CD8-positive, alpha-beta T cell (primary cell): ENCODE measurements at regions of chr1 and their contacts with region 1.

Region 1: GRCh38 chr1:9784508-9785133 is 39.1 kb downstream of the CLSTN1 start:
- DNase-seq: peak; percentile 36 to 84 (median 66)
- ATAC-seq: peak; percentile 54
- H3K4me3 ChIP-seq: no peak overlapping the region
- H3K4me3 Mint-ChIP-seq: no peak overlapping the region
- H3K27ac ChIP-seq: no peak overlapping the region
- H3K27ac Mint-ChIP-seq: no peak overlapping the region
- H3K4me1 ChIP-seq: peaks cover 20% of the 10 kb centered on the region
- H3K4me1 Mint-ChIP-seq: peaks cover 33% of the 10 kb centered on the region
- H3K27me3 ChIP-seq: no peaks in the 10 kb centered on the region
- H3K27me3 Mint-ChIP-seq: no peaks in the 10 kb centered on the region
- CTCF ChIP-seq: peak; percentile 80

Region 2: GRCh38 chr1:9615316-9616063 is 169.1 kb before region 1 on chr1:
- CTCF ChIA-PET with region 1: interaction called, 18 read pairs
- POLR2A ChIA-PET with region 1: no interaction called
- intact Hi-C with region 1: no loop called
- DNase-seq: peak; percentile 28 to 77 (median 58)
- ATAC-seq: peak; percentile 95
- H3K4me3 ChIP-seq: no peak overlapping the region
- H3K4me3 Mint-ChIP-seq: no peak overlapping the region
- H3K27ac ChIP-seq: no peak overlapping the region
- H3K27ac Mint-ChIP-seq: no peak overlapping the region
- H3K4me1 ChIP-seq: no peaks in the 10 kb centered on the region
- H3K4me1 Mint-ChIP-seq: peaks cover 2% of the 10 kb centered on the region
- H3K27me3 ChIP-seq: peaks cover 0 to 3% of the 10 kb centered on the region in 2 experiments
- H3K27me3 Mint-ChIP-seq: peaks cover 7% of the 10 kb centered on the region
- CTCF ChIP-seq: peak; percentile 70

Region 3: DNA sequence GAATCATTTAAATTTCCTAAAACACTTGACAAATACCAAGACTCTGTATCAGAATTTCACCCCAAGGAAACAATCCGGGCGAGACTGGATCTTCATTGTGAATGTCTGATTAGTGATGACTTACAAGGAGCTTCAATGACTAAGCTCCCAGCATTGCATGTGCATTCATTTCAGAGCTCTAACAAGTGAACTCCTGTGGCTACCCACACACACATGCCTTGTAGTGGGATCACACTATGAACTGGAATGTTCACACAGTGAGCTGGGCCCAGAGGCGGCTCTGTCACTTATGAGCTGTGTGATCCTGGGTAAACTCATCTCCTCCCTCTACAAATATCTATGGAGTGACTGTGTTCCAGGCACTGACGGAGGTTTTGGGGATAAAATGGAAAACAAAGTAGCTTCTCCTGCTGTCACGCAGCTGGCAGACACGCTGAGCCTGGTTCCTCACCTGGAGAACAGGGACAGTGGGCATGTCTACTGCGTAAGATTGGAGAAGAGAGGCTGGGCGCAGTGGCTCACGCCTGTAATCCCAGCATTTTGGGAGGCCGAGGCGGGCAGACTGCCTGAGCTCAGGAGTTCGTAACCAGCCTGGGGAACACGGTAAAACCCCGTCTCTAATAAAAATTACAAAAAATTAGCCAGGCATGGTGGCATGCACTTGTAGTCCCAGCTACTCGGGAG is 17.7 kb before region 1 on chr1:
- CTCF ChIA-PET with region 1: interaction called, 13 read pairs
- POLR2A ChIA-PET with region 1: no interaction called
- intact Hi-C with region 1: no loop called
- DNase-seq: no peak
- ATAC-seq: no peak
- H3K4me3 ChIP-seq: no peak overlapping the region
- H3K4me3 Mint-ChIP-seq: no peak overlapping the region
- H3K27ac ChIP-seq: no peak overlapping the region
- H3K27ac Mint-ChIP-seq: no peak overlapping the region
- H3K4me1 ChIP-seq: no peaks in the 10 kb centered on the region
- H3K4me1 Mint-ChIP-seq: peaks cover 17% of the 10 kb centered on the region
- H3K27me3 ChIP-seq: no peaks in the 10 kb centered on the region
- H3K27me3 Mint-ChIP-seq: no peaks in the 10 kb centered on the region
- CTCF ChIP-seq: no peak

Region 4: DNA sequence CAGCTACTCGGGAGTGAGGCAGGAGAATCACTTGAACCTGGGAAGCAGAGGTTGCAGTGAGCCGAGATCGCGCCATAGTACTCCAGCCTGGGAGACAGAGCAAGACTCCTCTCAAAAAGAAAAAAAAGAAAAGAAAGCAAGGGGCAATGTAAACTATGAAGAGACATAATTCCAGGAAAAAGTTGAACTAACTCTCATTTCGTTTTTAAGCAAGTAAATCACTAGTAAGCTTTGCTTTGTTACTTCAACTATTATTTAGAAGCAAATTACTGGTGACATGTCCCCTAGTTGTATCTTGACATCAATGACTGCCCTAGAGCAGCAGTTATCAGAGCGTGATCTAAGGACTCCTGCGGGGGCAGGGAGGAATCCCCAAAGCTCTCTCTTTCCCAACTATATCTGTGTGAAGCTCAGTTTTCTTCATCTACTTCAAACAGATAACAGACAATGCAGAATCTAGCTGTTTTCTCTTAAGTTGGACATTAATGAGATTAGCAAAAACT is 20.4 kb after region 1 on chr1:
- CTCF ChIA-PET with region 1: interaction called, 13 read pairs
- POLR2A ChIA-PET with region 1: no interaction called
- intact Hi-C with region 1: no loop called
- DNase-seq: no peak
- ATAC-seq: no peak
- H3K4me3 ChIP-seq: no peak overlapping the region
- H3K4me3 Mint-ChIP-seq: no peak overlapping the region
- H3K27ac ChIP-seq: no peak overlapping the region
- H3K27ac Mint-ChIP-seq: no peak overlapping the region
- H3K4me1 ChIP-seq: peaks cover 14% of the 10 kb centered on the region
- H3K4me1 Mint-ChIP-seq: peaks cover 58% of the 10 kb centered on the region
- H3K27me3 ChIP-seq: no peaks in the 10 kb centered on the region
- H3K27me3 Mint-ChIP-seq: no peaks in the 10 kb centered on the region
- CTCF ChIP-seq: no peak

Region 5: DNA sequence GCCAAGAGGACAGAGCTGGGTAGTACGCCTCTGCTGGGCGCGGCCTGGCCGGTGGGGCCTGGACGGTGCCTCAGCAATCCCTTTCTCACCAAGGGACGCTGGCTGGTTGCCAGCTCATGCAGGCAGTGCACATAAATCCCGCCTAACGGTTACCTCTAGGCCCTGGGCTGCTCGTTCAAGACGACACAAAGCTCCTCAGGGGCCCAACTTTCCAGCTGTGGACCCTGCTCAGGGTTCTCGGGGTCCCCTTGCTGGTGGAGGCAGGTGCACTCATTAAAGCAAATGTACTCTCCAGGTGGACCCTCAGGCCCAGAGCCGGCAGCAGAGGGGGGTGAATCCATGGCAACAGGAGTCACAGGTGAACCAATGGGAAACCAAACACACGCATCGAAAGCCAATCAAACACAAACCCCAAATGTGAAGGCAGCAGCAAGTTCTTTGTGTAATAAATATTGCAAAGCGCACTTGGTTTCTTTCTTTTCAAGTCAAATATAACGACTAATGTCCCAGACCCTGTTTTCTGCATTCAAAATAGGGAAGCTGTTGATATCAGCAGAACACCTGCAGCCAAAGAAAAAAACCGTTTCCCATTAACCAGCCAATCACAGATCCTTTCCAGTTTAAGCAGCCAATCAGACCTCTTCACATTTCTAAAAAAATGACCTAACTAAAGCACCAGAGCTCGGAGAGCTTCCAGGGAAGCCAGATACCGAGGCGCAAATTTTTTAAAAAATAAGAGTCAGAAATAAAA is 65.2 kb after region 1 on chr1:
- CTCF ChIA-PET with region 1: interaction called, 14 read pairs
- POLR2A ChIA-PET with region 1: interaction called, 3 read pairs
- intact Hi-C with region 1: no loop called
- DNase-seq: peak in 2 of 9 experiments; percentile 32 to 63
- ATAC-seq: peak; percentile 74
- H3K4me3 ChIP-seq: peak overlapping the region; percentile 3 to 39
- H3K4me3 Mint-ChIP-seq: peak overlapping the region; percentile 73
- H3K27ac ChIP-seq: no peak overlapping the region
- H3K27ac Mint-ChIP-seq: no peak overlapping the region
- H3K4me1 ChIP-seq: peaks cover 12% of the 10 kb centered on the region
- H3K4me1 Mint-ChIP-seq: peaks cover 7% of the 10 kb centered on the region
- H3K27me3 ChIP-seq: no peaks in the 10 kb centered on the region
- H3K27me3 Mint-ChIP-seq: no peaks in the 10 kb centered on the region
- CTCF ChIP-seq: no peak

Region 6: GRCh38 chr1:9942939-9943788 is 158.5 kb after region 1 on chr1 and contains the starts of genes LZIC and NMNAT1:
- CTCF ChIA-PET with region 1: interaction called, 7 read pairs
- POLR2A ChIA-PET with region 1: no interaction called
- intact Hi-C with region 1: loop called in 1 of 2 experiments (anchors 1 kb)
- DNase-seq: peak; percentile 74 to 94 (median 89)
- ATAC-seq: peak; percentile 91
- H3K4me3 ChIP-seq: peak within 1 kb of the TSS; percentile 82 to 88
- H3K4me3 Mint-ChIP-seq: peak within 1 kb of the TSS; percentile 89
- H3K27ac ChIP-seq: peak within 1 kb of the TSS; percentile 88 to 90
- H3K27ac Mint-ChIP-seq: peak within 1 kb of the TSS; percentile 90
- H3K4me1 ChIP-seq: peaks cover 20% of the 10 kb centered on the region
- H3K4me1 Mint-ChIP-seq: peaks cover 31% of the 10 kb centered on the region
- H3K27me3 ChIP-seq: no peaks in the 10 kb centered on the region
- H3K27me3 Mint-ChIP-seq: no peaks in the 10 kb centered on the region
- CTCF ChIP-seq: no peak
- total RNA-seq, gene LZIC: 12.9 to 13.6 TPM
- total RNA-seq, gene NMNAT1: 1.1 to 1.2 TPM

Region 7: GRCh38 chr1:10387413-10388079 is 602.9 kb after region 1 on chr1:
- CTCF ChIA-PET with region 1: no interaction called
- POLR2A ChIA-PET with region 1: no interaction called
- intact Hi-C with region 1: no loop called
- DNase-seq: no peak
- ATAC-seq: no peak
- H3K4me3 ChIP-seq: no peak overlapping the region
- H3K4me3 Mint-ChIP-seq: no peak overlapping the region
- H3K27ac ChIP-seq: no peak overlapping the region
- H3K27ac Mint-ChIP-seq: no peak overlapping the region
- H3K4me1 ChIP-seq: no peaks in the 10 kb centered on the region
- H3K4me1 Mint-ChIP-seq: peaks cover 5% of the 10 kb centered on the region
- H3K27me3 ChIP-seq: no peaks in the 10 kb centered on the region
- H3K27me3 Mint-ChIP-seq: no peaks in the 10 kb centered on the region
- CTCF ChIP-seq: no peak